ENCODE measurements at regions of chr1 and their contacts with region 1.

Region 1: GRCh38 chr1:77704736-77705135 is 22.3 kb upstream of the ZZZ3 start:
- DNase-seq: no peak
- H3K4me3 ChIP-seq: no peak overlapping the region
- H3K27ac ChIP-seq: no peak overlapping the region
- H3K4me1 ChIP-seq: no peaks in the 10 kb centered on the region
- CTCF ChIP-seq: no peak

Region 2: GRCh38 chr1:77779529-77780281 is 75.0 kb after region 1 on chr1 and contains the start of gene MIGA1:
- CTCF ChIA-PET with region 1: interaction called, 14 read pairs
- POLR2A ChIA-PET with region 1: no interaction called
- intact Hi-C with region 1: no loop called
- DNase-seq: peak; percentile 90
- H3K4me3 ChIP-seq: peak within 1 kb of the TSS; percentile 96
- H3K27ac ChIP-seq: peak within 1 kb of the TSS; percentile 21
- H3K4me1 ChIP-seq: peaks cover 24% of the 10 kb centered on the region
- CTCF ChIP-seq: no peak; the same call in 1 of the 2 replicates
- total RNA-seq, gene MIGA1: 3.7 and 5.1 TPM in 2 replicates

Region 3: GRCh38 chr1:77802026-77802425 is 97.3 kb after region 1 on chr1:
- CTCF ChIA-PET with region 1: no interaction called
- POLR2A ChIA-PET with region 1: interaction called, 3 read pairs
- intact Hi-C with region 1: loop called (anchors 5 kb)
- DNase-seq: no peak
- H3K4me3 ChIP-seq: no peak overlapping the region
- H3K27ac ChIP-seq: no peak overlapping the region
- H3K4me1 ChIP-seq: no peaks in the 10 kb centered on the region
- CTCF ChIP-seq: no peak

Measured in OCI-LY7 (cell line).